ENCODE measurements at regions of chr17 and their contacts with region 1.

Region 1: GRCh38 chr17:21511363-21512198 is 135.4 kb downstream of the KCNJ12 start:
- DNase-seq: peak; percentile 81
- ATAC-seq: peak; percentile 79
- H3K4me3 ChIP-seq: peak overlapping the region; percentile 7 to 69 (median 56)
- H3K4me3 Mint-ChIP-seq: peak overlapping the region; percentile 66
- H3K27ac ChIP-seq: peak overlapping the region in 1 of 2 donors; percentile 25
- H3K27ac Mint-ChIP-seq: peak overlapping the region; percentile 56
- H3K4me1 ChIP-seq: peaks cover 15 to 22% of the 10 kb centered on the region in 2 donors
- H3K4me1 Mint-ChIP-seq: peaks cover 28% of the 10 kb centered on the region
- H3K27me3 ChIP-seq: peaks cover 0 to 17% (median 4%) of the 10 kb centered on the region in 4 experiments
- H3K27me3 Mint-ChIP-seq: peaks cover 31% of the 10 kb centered on the region
- CTCF ChIP-seq: peak; percentile 81

Region 2: GRCh38 chr17:20944014-20944865 is 567.3 kb before region 1 on chr17:
- CTCF ChIA-PET with region 1: interaction called, 8 read pairs
- POLR2A ChIA-PET with region 1: no interaction called
- intact Hi-C with region 1: loop called (anchors 10 kb)
- DNase-seq: peak; percentile 51
- ATAC-seq: peak; percentile 60
- H3K4me3 ChIP-seq: no peak overlapping the region
- H3K4me3 Mint-ChIP-seq: no peak overlapping the region
- H3K27ac ChIP-seq: no peak overlapping the region
- H3K27ac Mint-ChIP-seq: no peak overlapping the region
- H3K4me1 ChIP-seq: no peaks in the 10 kb centered on the region
- H3K4me1 Mint-ChIP-seq: no peaks in the 10 kb centered on the region
- H3K27me3 ChIP-seq: peaks cover 0 to 7% (median 2%) of the 10 kb centered on the region in 4 experiments
- H3K27me3 Mint-ChIP-seq: peaks cover 11% of the 10 kb centered on the region
- CTCF ChIP-seq: peak; percentile 35

Region 3: GRCh38 chr17:21119247-21119918 is 392.2 kb before region 1 on chr17:
- CTCF ChIA-PET with region 1: interaction called, 144 read pairs
- POLR2A ChIA-PET with region 1: interaction called, 3 read pairs
- intact Hi-C with region 1: loop called (anchors 1 kb)
- DNase-seq: peak; percentile 81
- ATAC-seq: peak; percentile 92
- H3K4me3 ChIP-seq: no peak overlapping the region
- H3K4me3 Mint-ChIP-seq: no peak overlapping the region
- H3K27ac ChIP-seq: no peak overlapping the region
- H3K27ac Mint-ChIP-seq: peak overlapping the region; percentile 10
- H3K4me1 ChIP-seq: peaks cover 4% of the 10 kb centered on the region in 2 donors
- H3K4me1 Mint-ChIP-seq: peaks cover 4% of the 10 kb centered on the region
- H3K27me3 ChIP-seq: peaks cover 0 to 7% (median 1%) of the 10 kb centered on the region in 4 experiments
- H3K27me3 Mint-ChIP-seq: peaks cover 6% of the 10 kb centered on the region
- CTCF ChIP-seq: peak; percentile 83

Region 4: DNA sequence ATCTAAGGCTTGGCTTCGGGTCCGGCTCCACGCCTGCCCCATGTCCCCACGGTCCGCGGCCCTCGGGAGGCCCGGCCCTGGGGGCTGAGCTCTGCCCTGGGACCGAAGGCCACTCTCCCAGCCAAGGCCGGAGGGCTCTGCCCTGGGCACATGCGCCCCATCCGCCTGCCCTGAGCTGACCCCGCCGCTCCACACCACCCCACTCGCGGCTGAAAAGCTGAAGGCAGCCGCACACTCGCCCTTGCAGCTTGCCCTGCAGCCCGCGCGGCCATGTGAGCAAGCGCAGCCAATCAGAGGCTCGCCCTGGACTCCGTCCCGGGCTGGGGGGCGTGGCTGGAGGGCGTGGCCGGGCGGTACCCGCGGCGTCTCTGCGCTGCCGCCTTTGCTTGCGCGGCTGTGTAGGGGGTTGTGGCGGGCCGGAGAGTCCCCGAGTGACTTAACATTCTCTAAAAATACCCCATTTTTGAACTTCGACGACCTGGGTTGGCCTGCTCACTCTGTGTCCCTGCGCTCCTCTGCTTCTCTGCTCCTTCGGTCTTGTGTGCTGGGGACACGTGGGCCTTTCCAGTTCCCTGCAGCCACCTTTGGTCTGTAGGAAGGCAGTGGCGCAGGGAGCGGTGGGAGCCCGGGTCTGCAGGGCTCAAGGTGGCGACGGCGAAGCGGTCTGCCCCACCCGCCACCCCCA is 235.9 kb before region 1 on chr17:
- CTCF ChIA-PET with region 1: interaction called, 170 read pairs
- POLR2A ChIA-PET with region 1: no interaction called
- intact Hi-C with region 1: loop called (anchors 1 kb)
- DNase-seq: peak; percentile 93
- ATAC-seq: peak; percentile 86
- H3K4me3 ChIP-seq: peak overlapping the region; percentile 34 to 84 (median 71)
- H3K4me3 Mint-ChIP-seq: peak overlapping the region; percentile 98
- H3K27ac ChIP-seq: peak overlapping the region; percentile 86
- H3K27ac Mint-ChIP-seq: peak overlapping the region; percentile 86
- H3K4me1 ChIP-seq: peaks cover 35 to 41% of the 10 kb centered on the region in 2 donors
- H3K4me1 Mint-ChIP-seq: peaks cover 34% of the 10 kb centered on the region
- H3K27me3 ChIP-seq: no peaks in the 10 kb centered on the region
- H3K27me3 Mint-ChIP-seq: no peaks in the 10 kb centered on the region
- CTCF ChIP-seq: peak; percentile 34

Region 5: DNA sequence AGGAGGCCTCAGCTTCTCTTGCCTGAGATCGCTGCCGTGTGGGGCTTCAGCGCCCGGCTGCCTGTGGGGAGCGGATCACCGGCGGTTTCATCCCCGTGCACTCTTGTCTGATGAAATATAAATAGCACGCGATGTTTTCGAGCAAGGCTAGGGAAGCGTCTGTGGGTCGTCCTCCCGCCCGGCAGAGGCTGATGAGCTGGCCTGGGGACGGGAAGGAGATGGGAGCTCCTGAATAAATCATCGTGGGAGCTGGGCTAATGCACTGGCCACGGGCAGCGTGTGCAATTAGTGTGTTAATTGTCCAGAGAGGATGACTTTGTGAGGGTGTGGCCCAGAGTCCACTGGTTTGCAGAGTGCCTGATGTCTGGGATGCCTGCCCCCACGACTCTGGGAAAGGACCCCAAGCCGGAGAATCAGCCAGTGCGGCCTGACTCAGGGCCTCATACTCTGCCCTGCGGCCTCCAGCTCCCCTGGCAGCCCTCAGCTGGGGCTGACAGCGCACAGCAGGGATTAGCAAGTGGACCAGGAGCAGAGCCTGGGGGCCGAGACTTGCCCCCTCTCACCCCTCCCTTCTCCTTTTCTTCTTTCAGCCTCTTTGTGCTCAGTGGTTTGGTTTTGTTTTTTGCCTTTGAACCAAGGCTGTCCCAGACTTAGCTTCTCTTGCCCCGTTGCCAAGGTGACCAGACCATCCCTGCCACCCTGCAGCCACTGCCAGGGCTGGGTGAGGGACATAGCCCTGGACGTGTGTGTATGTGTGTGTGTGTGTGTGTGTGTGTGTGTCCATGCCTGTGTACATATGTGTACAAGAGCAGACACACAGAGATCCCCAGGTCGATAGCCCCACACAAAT is 114.0 kb before region 1 on chr17:
- CTCF ChIA-PET with region 1: no interaction called
- POLR2A ChIA-PET with region 1: no interaction called
- intact Hi-C with region 1: no loop called
- DNase-seq: no peak
- ATAC-seq: no peak
- H3K4me3 ChIP-seq: no peak overlapping the region
- H3K4me3 Mint-ChIP-seq: no peak overlapping the region
- H3K27ac ChIP-seq: no peak overlapping the region
- H3K27ac Mint-ChIP-seq: no peak overlapping the region
- H3K4me1 ChIP-seq: no peaks in the 10 kb centered on the region
- H3K4me1 Mint-ChIP-seq: no peaks in the 10 kb centered on the region
- H3K27me3 ChIP-seq: no peaks in the 10 kb centered on the region
- H3K27me3 Mint-ChIP-seq: no peaks in the 10 kb centered on the region
- CTCF ChIP-seq: no peak

Region 6: GRCh38 chr17:21457051-21458026 is 54.2 kb before region 1 on chr17:
- CTCF ChIA-PET with region 1: interaction called, 21 read pairs
- POLR2A ChIA-PET with region 1: no interaction called
- intact Hi-C with region 1: loop called (anchors 1 kb)
- DNase-seq: peak; percentile 83
- ATAC-seq: peak; percentile 93
- H3K4me3 ChIP-seq: no peak overlapping the region
- H3K4me3 Mint-ChIP-seq: no peak overlapping the region
- H3K27ac ChIP-seq: no peak overlapping the region
- H3K27ac Mint-ChIP-seq: no peak overlapping the region
- H3K4me1 ChIP-seq: peaks cover 0 to 5% of the 10 kb centered on the region in 2 donors
- H3K4me1 Mint-ChIP-seq: peaks cover 11% of the 10 kb centered on the region
- H3K27me3 ChIP-seq: peaks cover 0 to 20% (median 4%) of the 10 kb centered on the region in 4 experiments
- H3K27me3 Mint-ChIP-seq: peaks cover 43% of the 10 kb centered on the region
- CTCF ChIP-seq: peak; percentile 82

Region 7: GRCh38 chr17:21551081-21551881 is 39.7 kb after region 1 on chr17:
- CTCF ChIA-PET with region 1: interaction called, 3 read pairs
- POLR2A ChIA-PET with region 1: no interaction called
- intact Hi-C with region 1: loop called (anchors 2 kb)
- DNase-seq: peak; percentile 83
- ATAC-seq: peak; percentile 96
- H3K4me3 ChIP-seq: peak overlapping the region in 4 of 5 experiments; percentile 70 to 82 (median 72)
- H3K4me3 Mint-ChIP-seq: peak overlapping the region; percentile 89
- H3K27ac ChIP-seq: no peak overlapping the region
- H3K27ac Mint-ChIP-seq: peak overlapping the region; percentile 50
- H3K4me1 ChIP-seq: peaks cover 10 to 11% of the 10 kb centered on the region in 2 donors
- H3K4me1 Mint-ChIP-seq: peaks cover 19% of the 10 kb centered on the region
- H3K27me3 ChIP-seq: peaks cover 0 to 16% (median 4%) of the 10 kb centered on the region in 4 experiments
- H3K27me3 Mint-ChIP-seq: peaks cover 31% of the 10 kb centered on the region
- CTCF ChIP-seq: no peak

Measured in B cell (primary cell).